ENCODE measurements at regions of chr2 and their contacts with region 1.

Region 1: DNA sequence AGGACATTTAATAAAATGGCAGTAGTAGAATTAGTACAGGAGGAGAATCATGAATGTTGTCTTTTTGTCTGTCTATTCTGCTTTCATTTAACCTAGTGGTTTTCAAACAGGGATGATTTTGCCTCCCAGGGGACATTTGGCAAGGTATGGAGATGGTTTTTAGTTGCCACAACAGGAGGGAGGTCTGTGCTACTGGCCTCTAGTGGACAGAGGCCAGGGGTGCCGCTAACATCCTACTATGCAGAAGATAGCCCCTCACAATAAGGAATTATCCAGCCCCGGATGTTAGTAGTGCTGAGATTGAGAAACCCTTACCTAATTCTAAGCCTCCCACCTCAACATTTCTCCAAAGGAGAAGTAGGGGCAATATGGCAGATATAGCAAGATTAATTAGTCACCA is 18.3 kb downstream of the FASTKD2 start:
- DNase-seq: peak; percentile 19
- H3K4me3 ChIP-seq: no peak overlapping the region
- H3K27ac ChIP-seq: no peak overlapping the region; a peak in 1 of 4 replicates
- H3K4me1 ChIP-seq: peaks cover 0 to 8% of the 10 kb centered on the region in 2 experiments; a peak in 2 of 4 replicates
- H3K27me3 ChIP-seq: no peaks in the 10 kb centered on the region
- CTCF ChIP-seq: peak; percentile 62
- EP300 ChIP-seq: no peak
- RAD21 ChIP-seq: no peak; the same call in 1 of the 2 replicates

Region 2: DNA sequence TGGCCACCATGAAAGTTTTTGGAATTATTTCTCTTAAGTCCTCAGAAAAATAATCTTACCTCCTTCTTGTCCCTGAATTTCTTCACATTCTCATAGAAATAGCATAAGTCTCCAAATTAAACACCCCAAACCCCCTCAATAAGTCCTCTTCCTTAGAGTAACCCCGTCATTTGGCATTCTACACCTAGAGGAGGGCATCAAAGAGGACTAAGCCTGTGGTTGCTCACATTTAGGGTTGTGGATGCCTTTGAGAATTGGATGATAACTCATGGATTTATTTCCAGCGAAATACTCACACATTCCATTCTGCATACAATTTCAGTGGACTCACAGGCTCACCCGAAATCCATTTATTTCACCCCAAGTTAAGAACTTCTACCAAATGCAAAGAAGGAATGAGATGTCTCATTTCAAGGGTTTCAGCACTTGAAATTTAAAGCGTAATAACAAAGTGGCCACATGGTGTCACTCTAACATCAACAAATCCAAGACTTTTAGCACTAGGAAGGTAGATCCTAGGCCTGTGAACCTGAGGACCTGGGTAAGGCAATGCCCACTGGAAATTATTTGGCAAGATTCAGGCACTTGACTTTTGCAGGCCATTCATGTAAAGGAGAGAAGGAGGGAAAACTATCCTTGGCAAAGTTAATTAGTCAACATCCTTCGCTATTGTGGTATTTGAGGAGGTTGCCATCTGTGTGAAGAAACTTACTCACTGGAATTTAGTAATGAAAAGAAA is 90.2 kb before region 1 on chr2:
- CTCF ChIA-PET with region 1: interaction called, 58 read pairs
- POLR2A ChIA-PET with region 1: no interaction called
- DNase-seq: peak; percentile 59
- H3K4me3 ChIP-seq: no peak overlapping the region; a peak in 1 of 4 replicates
- H3K27ac ChIP-seq: no peak overlapping the region
- H3K4me1 ChIP-seq: no peaks in the 10 kb centered on the region
- H3K27me3 ChIP-seq: no peaks in the 10 kb centered on the region; the same call in 1 of the 2 replicates
- CTCF ChIP-seq: peak; percentile 77
- EP300 ChIP-seq: no peak
- RAD21 ChIP-seq: peak; percentile 94

Region 3: GRCh38 chr2:206765242-206766056 is 18.3 kb before region 1 on chr2 and contains the starts of genes FASTKD2 and MDH1B:
- CTCF ChIA-PET with region 1: interaction called, 11 read pairs
- POLR2A ChIA-PET with region 1: interaction called, 3 read pairs
- DNase-seq: peak; percentile 85
- H3K4me3 ChIP-seq: peak within 1 kb of the TSS; percentile 73 to 92
- H3K27ac ChIP-seq: peak within 1 kb of the TSS; percentile 80 to 93
- H3K4me1 ChIP-seq: peaks cover 0 to 5% of the 10 kb centered on the region in 2 experiments; a peak in 2 of 4 replicates
- H3K27me3 ChIP-seq: no peaks in the 10 kb centered on the region
- CTCF ChIP-seq: no peak
- EP300 ChIP-seq: no peak
- RAD21 ChIP-seq: no peak
- polyA plus RNA-seq, gene FASTKD2: 15.1 and 22.8 TPM in 2 replicates
- polyA plus RNA-seq, gene MDH1B: 1.7 and 2.8 TPM in 2 replicates

Measured in SK-N-SH (cell line).